ENCODE measurements at regions of chr19 and their contacts with region 1.

Region 1: GRCh38 chr19:54029930-54030490 is 33.7 kb downstream of the VSTM1 start:
- DNase-seq: peak; percentile 73 to 77
- H3K4me3 ChIP-seq: no peak overlapping the region
- H3K4me3 Mint-ChIP-seq: no peak overlapping the region
- H3K27ac Mint-ChIP-seq: no peak overlapping the region
- H3K4me1 ChIP-seq: no peaks in the 10 kb centered on the region
- H3K4me1 Mint-ChIP-seq: peaks cover 16% of the 10 kb centered on the region
- H3K27me3 ChIP-seq: no peaks in the 10 kb centered on the region
- H3K27me3 Mint-ChIP-seq: no peaks in the 10 kb centered on the region
- CTCF ChIP-seq: peak; percentile 67 to 69

Region 2: DNA sequence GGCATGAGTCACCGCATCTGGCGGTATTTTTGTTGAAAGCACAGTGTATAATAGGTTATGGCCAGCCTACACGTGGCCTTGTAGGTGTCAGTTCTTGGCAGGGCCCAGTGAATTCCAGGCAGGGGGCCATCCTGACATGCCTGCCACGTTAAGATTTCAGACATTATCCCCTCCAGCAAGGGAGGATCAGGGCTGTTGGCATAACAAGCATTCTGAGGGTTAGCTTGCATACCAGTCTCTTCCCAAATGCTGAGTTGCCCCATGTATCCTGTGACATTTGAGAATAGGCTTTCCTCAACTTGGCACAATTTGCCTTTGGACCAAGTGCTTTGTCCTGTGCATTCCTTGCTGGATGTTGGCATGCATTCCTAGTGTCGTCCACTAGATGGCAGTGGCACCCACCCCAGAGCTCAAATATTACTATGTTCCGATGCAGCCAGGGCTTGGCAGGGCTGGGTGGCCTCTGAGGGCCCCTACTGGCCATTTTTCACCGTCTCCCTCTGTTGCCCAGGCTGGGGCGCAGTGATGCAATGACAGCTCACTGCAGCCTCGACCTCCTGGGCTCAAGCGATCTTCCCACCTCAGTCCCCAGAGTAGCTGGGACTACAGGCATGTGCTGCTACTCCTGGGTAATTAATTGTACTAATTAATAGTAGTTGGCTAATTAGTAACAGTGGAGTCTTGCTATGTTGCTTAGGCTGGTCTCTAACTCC is 237.1 kb before region 1 on chr19:
- CTCF ChIA-PET with region 1: interaction called, 12 read pairs
- POLR2A ChIA-PET with region 1: no interaction called
- intact Hi-C with region 1: no loop called
- DNase-seq: peak; percentile 90
- H3K4me3 ChIP-seq: no peak overlapping the region
- H3K4me3 Mint-ChIP-seq: peak overlapping the region; percentile 59
- H3K27ac Mint-ChIP-seq: peak overlapping the region; percentile 86
- H3K4me1 ChIP-seq: peaks cover 27% of the 10 kb centered on the region
- H3K4me1 Mint-ChIP-seq: no peaks in the 10 kb centered on the region
- H3K27me3 ChIP-seq: no peaks in the 10 kb centered on the region
- H3K27me3 Mint-ChIP-seq: no peaks in the 10 kb centered on the region
- CTCF ChIP-seq: peak; percentile 90 to 97

Measured in Caco-2 (cell line).